ENCODE measurements at regions of chr18 and their contacts with region 1.

Region 1: DNA sequence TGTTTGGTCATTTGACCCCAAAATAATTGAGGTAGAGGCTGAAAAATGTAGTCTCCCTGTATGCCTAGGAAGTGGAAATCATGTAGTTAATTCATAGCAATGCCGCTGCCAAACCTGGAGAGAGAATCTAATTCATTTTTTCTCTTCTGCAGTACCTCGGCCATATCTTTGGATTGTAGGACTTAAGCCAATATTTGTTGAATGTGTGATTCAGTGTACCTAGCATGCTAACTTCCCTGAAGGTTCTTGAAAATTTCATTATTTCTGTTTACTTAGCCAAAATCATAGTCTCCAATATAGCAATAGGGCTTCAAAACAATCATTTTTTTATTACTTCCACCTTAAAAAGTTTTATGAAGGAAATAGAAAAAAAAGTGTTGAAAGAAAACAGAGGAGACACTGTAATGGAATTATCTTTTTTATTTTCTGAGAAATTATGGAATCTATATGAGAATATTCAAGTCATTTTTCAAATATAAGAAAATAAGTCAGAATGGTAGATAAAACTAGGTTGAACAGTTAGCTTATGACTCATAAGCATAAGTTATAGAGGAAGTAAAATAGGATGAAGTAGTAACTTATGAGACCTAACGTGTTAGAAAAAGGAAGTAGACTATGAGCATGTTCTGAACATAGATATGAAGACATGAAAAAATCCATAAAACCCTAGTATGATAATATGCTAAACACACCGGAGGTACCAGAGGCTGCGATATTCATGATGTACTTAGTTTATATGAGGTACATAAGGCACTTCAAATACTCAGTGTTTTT is 35.2 kb upstream of the CDH19 start:
- DNase-seq: no peak
- H3K4me3 ChIP-seq: no peak overlapping the region
- H3K27ac ChIP-seq: no peak overlapping the region
- H3K4me1 ChIP-seq: no peaks in the 10 kb centered on the region
- H3K27me3 ChIP-seq: no peaks in the 10 kb centered on the region
- CTCF ChIP-seq: no peak

Region 2: GRCh38 chr18:66729442-66730239 is 90.6 kb after region 1 on chr18:
- intact Hi-C with region 1: loop called (anchors 10 kb)
- DNase-seq: no peak
- H3K4me3 ChIP-seq: no peak overlapping the region
- H3K27ac ChIP-seq: no peak overlapping the region
- H3K4me1 ChIP-seq: no peaks in the 10 kb centered on the region
- H3K27me3 ChIP-seq: no peaks in the 10 kb centered on the region
- CTCF ChIP-seq: no peak

Region 3: DNA sequence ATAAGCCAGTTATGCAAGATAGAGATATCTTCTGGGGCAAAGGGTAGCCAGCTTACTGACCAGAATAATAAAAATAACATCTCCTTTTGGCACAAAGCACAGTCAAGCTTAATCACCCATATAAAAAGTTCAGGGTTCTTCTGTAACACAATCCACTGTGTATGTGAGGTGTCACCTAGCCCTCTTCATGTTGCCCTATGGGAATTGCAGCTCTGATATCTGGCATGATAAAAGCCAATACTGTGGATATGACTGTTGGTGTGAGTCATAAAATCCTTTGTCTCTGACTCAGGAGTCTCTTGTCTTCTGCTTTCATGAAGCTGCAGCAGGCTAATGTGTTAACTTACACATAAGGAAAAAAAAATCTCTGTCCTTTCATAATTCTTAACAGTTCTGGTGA is 786.7 kb after region 1 on chr18:
- intact Hi-C with region 1: no loop called
- DNase-seq: no peak
- H3K4me3 ChIP-seq: no peak overlapping the region
- H3K27ac ChIP-seq: no peak overlapping the region
- H3K4me1 ChIP-seq: no peaks in the 10 kb centered on the region
- H3K27me3 ChIP-seq: no peaks in the 10 kb centered on the region
- CTCF ChIP-seq: no peak